ENCODE measurements at regions of chr17 and their contacts with region 1.

Region 1: GRCh38 chr17:49227436-49228261 is 2.9 kb downstream of the PHOSPHO1 start:
- DNase-seq: peak in 1 of 2 donors; percentile 46
- H3K4me3 ChIP-seq: no peak overlapping the region
- H3K27ac ChIP-seq: no peak overlapping the region
- H3K4me1 ChIP-seq: peaks cover 4 to 12% of the 10 kb centered on the region in 2 donors
- H3K27me3 ChIP-seq: peaks cover 3 to 58% of the 10 kb centered on the region in 2 donors
- CTCF ChIP-seq: peak; percentile 28 to 79 (median 70)
- POLR2A ChIP-seq: no peak

Region 2: DNA sequence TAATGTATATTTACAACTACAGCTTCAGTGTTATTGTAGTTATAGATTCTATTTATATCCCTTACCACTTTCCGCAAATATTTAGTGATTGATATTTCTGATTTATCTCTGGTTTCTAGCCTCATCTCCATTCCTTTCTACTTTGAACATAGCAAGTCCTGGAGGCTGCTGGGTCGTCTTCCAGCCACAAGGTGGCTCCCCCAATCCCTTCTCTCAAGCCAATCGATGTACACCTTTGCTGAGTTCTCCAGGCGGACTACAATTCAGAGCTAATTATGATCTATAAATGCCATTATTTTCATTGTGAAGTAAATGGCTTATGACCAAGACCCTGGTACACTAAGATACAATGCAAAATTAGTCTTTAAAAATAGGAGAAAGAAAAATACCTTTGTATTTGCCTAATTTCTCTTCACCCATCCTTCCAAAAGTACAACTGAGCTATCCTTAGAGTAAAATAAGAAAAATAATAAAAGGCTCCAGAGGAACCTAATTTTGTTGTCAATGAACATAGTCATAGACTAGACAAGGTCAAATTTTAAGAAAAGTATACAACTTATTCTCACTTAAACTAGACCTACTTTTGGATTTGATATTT is 919.7 kb before region 1 on chr17:
- intact Hi-C with region 1: loop called (anchors 5 kb)
- DNase-seq: no peak
- H3K4me3 ChIP-seq: no peak overlapping the region
- H3K27ac ChIP-seq: no peak overlapping the region
- H3K4me1 ChIP-seq: no peaks in the 10 kb centered on the region
- H3K27me3 ChIP-seq: peaks cover 0 to 39% of the 10 kb centered on the region in 2 donors
- CTCF ChIP-seq: peak; percentile 44 to 66 (median 57)
- POLR2A ChIP-seq: no peak